GM12878 (cell line): ENCODE measurements at regions of chr11 and their contacts with region 1.

Region 1: DNA sequence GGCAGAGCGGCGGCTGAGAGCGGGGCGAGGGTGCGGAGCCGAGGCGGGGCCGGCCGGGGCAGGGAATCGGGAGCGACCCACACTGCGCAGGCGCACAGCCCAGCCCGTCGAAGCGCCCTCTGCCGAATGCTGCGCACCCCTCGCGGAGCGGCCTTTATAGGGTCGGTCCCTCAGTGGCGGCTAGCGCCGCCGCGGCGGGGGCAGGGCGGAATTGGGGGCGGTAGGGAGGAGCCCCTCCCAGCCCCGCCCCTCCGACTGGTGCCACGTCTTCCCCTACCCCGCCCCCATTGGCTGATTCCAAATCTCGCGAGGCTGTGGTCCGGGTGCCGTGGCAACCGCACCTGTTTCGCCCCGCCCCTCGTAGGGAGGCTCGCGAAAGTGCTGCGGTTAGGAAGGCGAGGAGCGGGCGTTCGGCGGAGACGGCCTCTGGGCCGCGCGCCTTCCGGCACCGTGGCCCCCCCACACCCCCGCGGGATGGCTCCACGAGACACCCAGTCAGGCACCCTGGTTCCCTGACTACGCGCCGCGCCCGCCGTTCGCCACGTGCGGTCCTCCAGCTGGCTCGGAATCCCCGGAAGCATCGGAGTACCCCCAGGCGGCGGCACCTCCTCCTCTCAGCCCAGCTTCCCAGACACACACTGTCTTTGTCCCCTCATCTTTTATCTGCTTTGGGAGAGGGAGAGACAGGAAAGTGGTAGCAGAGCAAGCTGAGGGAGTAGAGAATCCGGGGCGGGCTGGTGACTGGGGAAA is at the start of gene EHD1:
- DNase-seq: peak; percentile 92
- ATAC-seq: peak; percentile 78
- H3K4me3 ChIP-seq: peak within 1 kb of the TSS; percentile 96
- H3K27ac ChIP-seq: peak within 1 kb of the TSS; percentile 97
- H3K4me1 ChIP-seq: peaks cover 30% of the 10 kb centered on the region
- H3K27me3 ChIP-seq: no peaks in the 10 kb centered on the region
- CTCF ChIP-seq: peak; percentile 41 to 91 (median 54); a peak in 5 of 6 replicates
- EP300 ChIP-seq: 0 out of 4 replicates have a peak, but pooled peaks of 1 of the 2 experiments have one; percentile 35
- POLR2A ChIP-seq: peak; percentile 100
- RAD21 ChIP-seq: no peak
- polyA plus RNA-seq, gene EHD1: 1.0 to 2.2 TPM

Region 2: DNA sequence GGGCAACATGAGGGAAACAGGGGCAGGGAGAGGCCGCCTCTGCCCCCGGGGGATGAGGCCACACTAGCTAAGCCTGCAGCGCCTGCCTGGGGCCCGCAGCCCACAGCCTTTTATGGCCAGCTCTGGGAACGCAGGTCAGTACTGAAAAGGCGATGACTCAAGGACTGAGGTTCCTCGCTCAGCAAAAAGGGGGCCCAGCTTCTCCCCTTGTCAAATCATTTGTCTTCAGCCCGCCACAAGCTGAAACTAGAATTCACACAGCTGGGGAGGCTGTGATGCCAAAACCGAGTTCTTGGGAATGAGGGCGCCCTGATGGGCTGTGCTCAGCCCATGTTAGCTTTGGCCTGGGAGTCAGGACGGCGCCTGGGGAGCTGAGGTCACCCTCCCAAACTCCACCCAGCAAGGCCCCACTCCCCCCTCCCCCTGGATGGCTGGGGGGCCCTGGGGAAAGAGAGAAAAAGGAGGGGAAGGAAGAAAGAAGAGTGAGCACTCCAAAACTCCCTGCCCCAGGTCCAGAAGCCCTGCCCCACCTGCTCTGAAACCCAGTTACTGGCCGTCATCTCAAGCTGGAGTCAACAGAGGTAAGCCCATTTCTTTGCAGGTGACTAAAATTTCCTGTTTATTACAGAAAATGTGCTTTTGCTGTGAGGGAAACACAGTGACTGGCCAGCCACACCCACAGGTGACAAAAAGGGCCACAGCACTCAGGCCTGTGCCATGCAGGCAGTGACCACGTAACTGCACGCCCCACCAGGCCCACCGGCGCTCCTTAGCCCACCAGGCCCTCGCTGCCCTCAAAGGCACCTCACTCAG is 14.0 kb before region 1 on chr11:
- CTCF ChIA-PET with region 1: interaction called, 1,208 read pairs
- POLR2A ChIA-PET with region 1: interaction called, 620 read pairs
- RAD21 ChIA-PET with region 1: interaction called, 253 read pairs
- SMC1A ChIA-PET with region 1: interaction called, 226 read pairs
- in situ Hi-C with region 1: no loop called
- intact Hi-C with region 1: loop called (anchors 2 kb)
- DNase-seq: no peak
- ATAC-seq: peak; percentile 59
- H3K4me3 ChIP-seq: peak overlapping the region; percentile 44
- H3K27ac ChIP-seq: peak overlapping the region; percentile 99
- H3K4me1 ChIP-seq: peaks cover 91% of the 10 kb centered on the region
- H3K27me3 ChIP-seq: no peaks in the 10 kb centered on the region
- CTCF ChIP-seq: no peak
- EP300 ChIP-seq: peak in 1 of 2 experiments; percentile 26; a peak in 2 of 4 replicates
- POLR2A ChIP-seq: peak; percentile 78
- RAD21 ChIP-seq: no peak